Stomach (tissue), 19 donors: ENCODE measurements at regions of chr7 and their contacts with region 1.

Region 1: GRCh38 chr7:132318352-132319318 is 257.6 kb downstream of the PLXNA4 start:
- DNase-seq: peak; percentile 86 to 96
- H3K4me3 ChIP-seq: no peak overlapping the region
- H3K27ac ChIP-seq: no peak overlapping the region
- H3K4me1 ChIP-seq: peaks cover 6 to 13% (median 10%) of the 10 kb centered on the region in 4 donors
- H3K27me3 ChIP-seq: peaks cover 0 to 22% (median 4%) of the 10 kb centered on the region in 3 donors
- CTCF ChIP-seq: peak in 5 of 7 experiments; percentile 82 to 91 (median 85)
- EP300 ChIP-seq: no peak
- POLR2A ChIP-seq: no peak

Region 2: GRCh38 chr7:131581241-131582051 is 737.2 kb before region 1 on chr7:
- intact Hi-C with region 1: no loop called
- DNase-seq: peak; percentile 28 to 59
- H3K4me3 ChIP-seq: no peak overlapping the region
- H3K27ac ChIP-seq: peak overlapping the region in 4 of 5 donors; percentile 25 to 50 (median 40)
- H3K4me1 ChIP-seq: peaks cover 0 to 3% (median 0%) of the 10 kb centered on the region in 4 donors
- H3K27me3 ChIP-seq: no peaks in the 10 kb centered on the region
- CTCF ChIP-seq: no peak
- EP300 ChIP-seq: no peak
- POLR2A ChIP-seq: no peak

Region 3: GRCh38 chr7:132500727-132501440 is 182.2 kb after region 1 on chr7:
- intact Hi-C with region 1: loop called (anchors 10 kb)
- DNase-seq: peak; percentile 64 to 80
- H3K4me3 ChIP-seq: no peak overlapping the region
- H3K27ac ChIP-seq: no peak overlapping the region
- H3K4me1 ChIP-seq: peaks cover 0 to 31% (median 4%) of the 10 kb centered on the region in 4 donors
- H3K27me3 ChIP-seq: no peaks in the 10 kb centered on the region
- CTCF ChIP-seq: peak in 5 of 7 experiments; percentile 39 to 54 (median 50)
- EP300 ChIP-seq: no peak
- POLR2A ChIP-seq: no peak

Region 4: GRCh38 chr7:132580717-132581285 is 262.2 kb after region 1 on chr7:
- intact Hi-C with region 1: loop called (anchors 5 kb)
- DNase-seq: peak; percentile 68 to 94
- H3K4me3 ChIP-seq: no peak overlapping the region
- H3K27ac ChIP-seq: no peak overlapping the region
- H3K4me1 ChIP-seq: peaks cover 8 to 22% (median 17%) of the 10 kb centered on the region in 4 donors
- H3K27me3 ChIP-seq: peaks cover 4 to 48% (median 23%) of the 10 kb centered on the region in 3 donors
- CTCF ChIP-seq: peak in 5 of 7 experiments; percentile 43 to 74 (median 70)
- EP300 ChIP-seq: no peak
- POLR2A ChIP-seq: no peak